ENCODE measurements at regions of chr5 and their contacts with region 1.

Region 1: GRCh38 chr5:173057062-173057924 is 1.1 kb downstream of the CREBRF start:
- DNase-seq: peak; percentile 96 to 99 (median 98)
- ATAC-seq: peak; percentile 90
- H3K4me3 ChIP-seq: peak overlapping the region; percentile 96
- H3K4me3 Mint-ChIP-seq: peak overlapping the region; percentile 91 to 97 (median 94)
- H3K27ac ChIP-seq: peak overlapping the region; percentile 97
- H3K27ac Mint-ChIP-seq: peak overlapping the region; percentile 90 to 96 (median 94)
- H3K4me1 ChIP-seq: peaks cover 22 to 33% of the 10 kb centered on the region in 2 donors
- H3K4me1 Mint-ChIP-seq: peaks cover 21 to 72% (median 59%) of the 10 kb centered on the region in 7 donors
- H3K27me3 ChIP-seq: peaks cover 0 to 5% of the 10 kb centered on the region in 2 donors
- H3K27me3 Mint-ChIP-seq: no peaks in the 10 kb centered on the region

Region 2: GRCh38 chr5:172283020-172283861 is 774.1 kb before region 1 on chr5 and contains the start of gene UBTD2:
- CTCF ChIA-PET with region 1: no interaction called
- POLR2A ChIA-PET with region 1: no interaction called
- intact Hi-C with region 1: loop called in 1 of 2 experiments (anchors 10 kb)
- DNase-seq: peak in 7 of 9 donors; percentile 51 to 84 (median 67)
- ATAC-seq: peak; percentile 89
- H3K4me3 ChIP-seq: peak within 1 kb of the TSS; percentile 73
- H3K4me3 Mint-ChIP-seq: peak within 1 kb of the TSS; percentile 85 to 94 (median 90)
- H3K27ac ChIP-seq: peak within 1 kb of the TSS; percentile 61
- H3K27ac Mint-ChIP-seq: peak within 1 kb of the TSS; percentile 67 to 94 (median 75)
- H3K4me1 ChIP-seq: peaks cover 11 to 13% of the 10 kb centered on the region in 2 donors
- H3K4me1 Mint-ChIP-seq: peaks cover 10 to 34% (median 29%) of the 10 kb centered on the region in 7 donors
- H3K27me3 ChIP-seq: no peaks in the 10 kb centered on the region
- H3K27me3 Mint-ChIP-seq: peaks cover 0 to 24% (median 0%) of the 10 kb centered on the region in 5 donors
- total RNA-seq, gene UBTD2: 2.3 to 8.3 (median 5.9) TPM

Region 3: GRCh38 chr5:172502969-172503368 is 554.3 kb before region 1 on chr5:
- CTCF ChIA-PET with region 1: no interaction called
- POLR2A ChIA-PET with region 1: no interaction called
- intact Hi-C with region 1: no loop called
- DNase-seq: peak in 1 of 9 donors; percentile 15
- ATAC-seq: no peak
- H3K4me3 ChIP-seq: no peak overlapping the region
- H3K4me3 Mint-ChIP-seq: no peak overlapping the region
- H3K27ac ChIP-seq: no peak overlapping the region
- H3K27ac Mint-ChIP-seq: no peak overlapping the region
- H3K4me1 ChIP-seq: no peaks in the 10 kb centered on the region
- H3K4me1 Mint-ChIP-seq: no peaks in the 10 kb centered on the region
- H3K27me3 ChIP-seq: no peaks in the 10 kb centered on the region
- H3K27me3 Mint-ChIP-seq: peaks cover 3 to 23% (median 16%) of the 10 kb centered on the region in 5 donors

Region 4: GRCh38 chr5:172833686-172834414 is 223.4 kb before region 1 on chr5 and contains the start of gene ERGIC1:
- CTCF ChIA-PET with region 1: no interaction called
- POLR2A ChIA-PET with region 1: no interaction called
- intact Hi-C with region 1: loop called (anchors 1 to 10 kb)
- DNase-seq: peak; percentile 49 to 84 (median 58)
- ATAC-seq: peak; percentile 87
- H3K4me3 ChIP-seq: peak within 1 kb of the TSS; percentile 68
- H3K4me3 Mint-ChIP-seq: peak within 1 kb of the TSS; percentile 85 to 93 (median 90)
- H3K27ac ChIP-seq: peak within 1 kb of the TSS; percentile 87
- H3K27ac Mint-ChIP-seq: peak within 1 kb of the TSS; percentile 87 to 97 (median 94)
- H3K4me1 ChIP-seq: peaks cover 23 to 38% of the 10 kb centered on the region in 2 donors
- H3K4me1 Mint-ChIP-seq: peaks cover 25 to 50% (median 40%) of the 10 kb centered on the region in 7 donors
- H3K27me3 ChIP-seq: no peaks in the 10 kb centered on the region
- H3K27me3 Mint-ChIP-seq: no peaks in the 10 kb centered on the region
- total RNA-seq, gene ERGIC1: 44.4 to 71.3 (median 53.5) TPM

Region 5: DNA sequence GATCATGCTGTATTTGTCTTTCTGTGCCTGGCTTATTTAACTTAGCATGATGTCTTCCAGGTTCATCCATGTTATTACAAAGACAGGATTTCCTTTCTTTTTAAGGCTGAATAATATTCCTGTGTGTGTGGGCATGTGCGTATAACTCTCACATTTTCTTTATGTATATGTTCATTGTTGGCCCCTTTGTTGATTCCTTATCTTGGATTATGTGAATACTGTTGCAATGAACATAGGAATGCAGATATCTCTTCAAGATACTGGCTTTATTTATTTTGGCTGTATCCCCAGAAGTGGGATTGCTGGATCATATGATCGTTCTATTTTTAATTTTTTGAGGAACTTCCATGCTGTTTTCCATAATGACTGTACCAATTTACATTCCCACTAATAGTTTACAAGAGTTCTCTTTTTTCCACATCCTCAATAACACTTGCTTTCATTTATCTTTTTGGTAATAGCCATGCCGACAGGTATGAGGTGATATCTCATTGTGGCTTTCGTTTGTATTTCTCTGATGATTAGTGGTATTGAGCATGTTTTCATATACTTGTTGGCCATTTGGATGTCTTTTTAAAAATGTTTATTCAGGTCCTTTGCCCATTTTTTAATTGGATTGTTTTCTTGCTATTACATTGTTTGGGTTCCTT is 36.8 kb after region 1 on chr5:
- CTCF ChIA-PET with region 1: no interaction called
- POLR2A ChIA-PET with region 1: no interaction called
- intact Hi-C with region 1: loop called in 1 of 2 experiments (anchors 5 kb)
- DNase-seq: no peak
- ATAC-seq: no peak
- H3K4me3 ChIP-seq: no peak overlapping the region
- H3K4me3 Mint-ChIP-seq: no peak overlapping the region
- H3K27ac ChIP-seq: no peak overlapping the region
- H3K27ac Mint-ChIP-seq: peak overlapping the region in 6 of 9 donors; percentile 6 to 44 (median 24)
- H3K4me1 ChIP-seq: peaks cover 0 to 3% of the 10 kb centered on the region in 2 donors
- H3K4me1 Mint-ChIP-seq: peaks cover 0 to 78% (median 67%) of the 10 kb centered on the region in 7 donors
- H3K27me3 ChIP-seq: no peaks in the 10 kb centered on the region
- H3K27me3 Mint-ChIP-seq: no peaks in the 10 kb centered on the region

Region 6: DNA sequence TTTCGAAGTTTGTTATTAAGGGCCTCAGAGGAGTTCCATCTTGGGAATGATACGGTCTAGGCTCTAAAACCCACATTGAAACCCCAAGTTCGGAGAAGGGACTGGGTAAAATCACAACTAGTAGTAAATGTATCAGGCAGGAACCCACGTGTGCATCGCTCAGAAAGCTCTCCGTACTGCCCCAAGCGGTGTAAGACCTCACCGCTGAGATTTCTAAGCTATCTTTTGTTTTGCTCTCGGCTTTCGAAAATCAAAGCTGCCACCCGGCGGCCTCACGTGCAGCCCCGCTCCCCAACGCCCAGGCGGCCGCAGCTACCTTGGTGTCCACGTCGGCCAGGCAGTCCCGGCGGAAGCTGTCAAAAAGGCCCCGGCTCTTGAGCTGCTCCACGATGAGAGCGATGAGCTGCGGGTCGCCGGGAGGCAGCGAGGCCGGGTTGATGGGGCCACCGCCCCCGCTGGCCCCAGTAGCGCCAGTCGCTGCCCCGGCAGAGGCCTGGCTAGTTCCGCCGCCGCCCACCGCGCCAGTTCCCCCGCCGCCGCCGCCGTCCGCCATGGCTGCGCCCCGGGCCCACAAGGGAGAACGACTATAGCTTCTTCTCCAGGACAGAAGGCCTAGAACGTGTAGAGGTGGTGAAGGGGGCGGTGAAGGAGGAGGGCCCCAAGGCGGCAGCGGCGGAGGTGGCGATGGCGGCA is 558.7 kb after region 1 on chr5:
- CTCF ChIA-PET with region 1: no interaction called
- POLR2A ChIA-PET with region 1: no interaction called
- intact Hi-C with region 1: loop called in 1 of 2 experiments (anchors 1 kb)
- DNase-seq: peak; percentile 47 to 78 (median 73)
- ATAC-seq: peak; percentile 73
- H3K4me3 ChIP-seq: peak overlapping the region; percentile 71
- H3K4me3 Mint-ChIP-seq: peak overlapping the region; percentile 85 to 97 (median 92)
- H3K27ac ChIP-seq: peak overlapping the region; percentile 99
- H3K27ac Mint-ChIP-seq: peak overlapping the region; percentile 79 to 98 (median 93)
- H3K4me1 ChIP-seq: peaks cover 21 to 24% of the 10 kb centered on the region in 2 donors
- H3K4me1 Mint-ChIP-seq: peaks cover 28 to 60% (median 51%) of the 10 kb centered on the region in 7 donors
- H3K27me3 ChIP-seq: no peaks in the 10 kb centered on the region
- H3K27me3 Mint-ChIP-seq: no peaks in the 10 kb centered on the region

Measured in naive thymus-derived CD4-positive, alpha-beta T cell (primary cell).